Calu3 (cell line): ENCODE measurements at regions of chr13 and their contacts with region 1.

Region 1: GRCh38 chr13:25752957-25753551 is 298.8 kb downstream of the SHISA2 start:
- DNase-seq: no peak
- H3K4me3 Mint-ChIP-seq: no peak overlapping the region
- H3K27ac Mint-ChIP-seq: no peak overlapping the region
- H3K4me1 Mint-ChIP-seq: no peaks in the 10 kb centered on the region
- H3K27me3 Mint-ChIP-seq: peaks cover 30% of the 10 kb centered on the region
- CTCF ChIP-seq: no peak

Region 2: GRCh38 chr13:26074706-26075105 is 321.7 kb after region 1 on chr13:
- CTCF ChIA-PET with region 1: no interaction called
- intact Hi-C with region 1: loop called (anchors 5 kb)
- DNase-seq: peak; percentile 24
- H3K4me3 Mint-ChIP-seq: no peak overlapping the region
- H3K27ac Mint-ChIP-seq: no peak overlapping the region
- H3K4me1 Mint-ChIP-seq: no peaks in the 10 kb centered on the region
- H3K27me3 Mint-ChIP-seq: no peaks in the 10 kb centered on the region
- CTCF ChIP-seq: no peak